WTC11 (cell line): ENCODE measurements at regions of chr14 and their contacts with region 1.

Region 1: GRCh38 chr14:96051642-96052540 is 12.7 kb downstream of the C14orf132 start:
- DNase-seq: peak; percentile 52
- ATAC-seq: peak; percentile 86
- H3K4me3 Mint-ChIP-seq: no peak overlapping the region
- H3K27ac Mint-ChIP-seq: no peak overlapping the region; the same call in 1 of the 2 replicates
- H3K4me1 Mint-ChIP-seq: peaks cover 7% of the 10 kb centered on the region
- H3K27me3 Mint-ChIP-seq: no peaks in the 10 kb centered on the region
- CTCF ChIP-seq: peak; percentile 46; the same call in 1 of the 2 replicates

Region 2: DNA sequence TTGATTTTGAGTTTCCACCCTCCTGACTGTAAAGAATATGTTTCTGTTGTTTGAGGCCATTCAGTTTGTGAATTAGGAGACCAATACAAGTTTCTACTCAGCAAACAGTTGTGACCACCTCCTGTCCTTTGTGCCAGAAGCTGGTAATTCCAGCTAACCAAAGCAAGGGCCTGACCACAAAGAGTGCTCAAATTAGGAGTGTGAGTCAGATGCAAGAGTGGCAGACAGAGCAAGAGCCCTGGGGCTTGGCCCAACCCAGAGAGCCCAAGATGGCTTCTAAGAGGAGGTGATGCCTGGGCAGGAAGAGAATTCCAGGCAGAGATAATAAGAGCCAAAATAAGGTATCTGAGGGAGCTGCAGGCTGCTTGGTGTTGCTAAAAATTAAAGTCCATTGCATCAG is 90.4 kb before region 1 on chr14:
- CTCF ChIA-PET with region 1: no interaction called
- POLR2A ChIA-PET with region 1: no interaction called
- DNase-seq: no peak
- ATAC-seq: no peak
- H3K4me3 Mint-ChIP-seq: no peak overlapping the region
- H3K27ac Mint-ChIP-seq: no peak overlapping the region
- H3K4me1 Mint-ChIP-seq: peaks cover 61% of the 10 kb centered on the region
- H3K27me3 Mint-ChIP-seq: peaks cover 3% of the 10 kb centered on the region
- CTCF ChIP-seq: no peak

Region 3: DNA sequence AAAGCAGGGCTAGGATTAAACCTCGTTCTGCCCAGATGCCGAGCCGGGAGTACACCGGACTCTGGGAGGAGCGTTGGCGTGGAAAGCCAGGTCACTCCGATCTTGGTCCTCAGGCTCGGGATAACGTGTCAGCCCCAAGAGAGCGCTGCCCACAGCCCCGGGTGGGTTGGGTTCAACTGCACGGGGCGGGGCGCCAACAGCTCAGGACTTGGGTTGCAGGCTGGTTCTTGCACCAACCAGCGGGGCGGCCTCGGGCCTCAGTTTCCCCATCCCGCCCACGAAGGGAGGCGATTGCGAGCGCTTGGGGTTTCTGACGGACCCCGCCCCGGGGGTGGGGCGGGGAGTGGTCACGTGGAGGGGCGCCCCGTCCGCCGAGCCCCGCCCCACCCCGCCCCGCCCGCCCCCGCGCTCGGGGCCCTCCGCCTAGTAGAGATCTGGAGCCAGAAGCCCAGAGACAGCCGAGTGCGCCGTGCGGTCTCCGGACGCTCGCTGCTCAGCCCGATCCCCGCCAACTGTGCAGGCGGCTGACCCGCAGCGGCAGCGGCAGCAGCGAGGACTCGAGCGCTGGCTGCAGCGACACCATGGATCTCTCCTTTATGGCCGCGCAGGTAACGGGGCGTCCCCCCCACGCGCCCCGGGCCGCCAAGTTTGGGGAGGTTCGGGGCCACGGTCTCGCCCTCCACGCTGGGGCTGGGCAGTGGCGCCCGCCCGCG is 12.8 kb before region 1 on chr14 and contains the start of gene C14orf132:
- CTCF ChIA-PET with region 1: interaction called, 16 read pairs
- POLR2A ChIA-PET with region 1: no interaction called
- DNase-seq: peak; percentile 72
- ATAC-seq: peak; percentile 87
- H3K4me3 Mint-ChIP-seq: peak within 1 kb of the TSS; percentile 81
- H3K27ac Mint-ChIP-seq: no peak within 1 kb of the TSS
- H3K4me1 Mint-ChIP-seq: peaks cover 25% of the 10 kb centered on the region
- H3K27me3 Mint-ChIP-seq: peaks cover 57% of the 10 kb centered on the region
- CTCF ChIP-seq: no peak
- total RNA-seq, gene C14orf132: 14.1 to 17.6 TPM (median 16.0 TPM) in 3 replicates